ENCODE measurements at regions of chr3 and their contacts with region 1.

Region 1: DNA sequence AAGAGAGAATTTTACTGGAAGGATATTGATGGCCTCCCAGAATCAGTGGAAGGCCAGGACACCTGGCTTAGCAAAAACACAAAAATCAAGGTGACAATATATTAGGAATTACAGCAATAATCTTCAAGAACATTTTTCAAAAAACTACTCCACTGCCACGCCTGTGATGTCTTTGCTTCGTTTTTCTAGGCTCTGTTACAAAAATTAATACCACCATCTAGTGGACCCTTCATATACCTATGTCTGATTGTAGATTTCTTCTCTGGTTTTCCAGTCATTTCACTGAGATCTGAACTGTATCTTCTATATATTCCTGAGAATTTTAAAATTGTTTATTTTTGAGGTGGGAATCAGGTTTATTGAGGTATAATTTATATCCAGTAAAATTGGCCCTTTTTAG is 5.6 kb upstream of the SLC33A1 start:
- DNase-seq: peak; percentile 42
- ATAC-seq: peak; percentile 75
- H3K4me3 ChIP-seq: no peak overlapping the region
- H3K27ac ChIP-seq: no peak overlapping the region
- H3K4me1 ChIP-seq: peaks cover 3% of the 10 kb centered on the region; the same call in 1 of the 2 replicates
- H3K27me3 ChIP-seq: no peaks in the 10 kb centered on the region
- CTCF ChIP-seq: peak; percentile 58; the same call in 1 of the 2 replicates

Region 2: DNA sequence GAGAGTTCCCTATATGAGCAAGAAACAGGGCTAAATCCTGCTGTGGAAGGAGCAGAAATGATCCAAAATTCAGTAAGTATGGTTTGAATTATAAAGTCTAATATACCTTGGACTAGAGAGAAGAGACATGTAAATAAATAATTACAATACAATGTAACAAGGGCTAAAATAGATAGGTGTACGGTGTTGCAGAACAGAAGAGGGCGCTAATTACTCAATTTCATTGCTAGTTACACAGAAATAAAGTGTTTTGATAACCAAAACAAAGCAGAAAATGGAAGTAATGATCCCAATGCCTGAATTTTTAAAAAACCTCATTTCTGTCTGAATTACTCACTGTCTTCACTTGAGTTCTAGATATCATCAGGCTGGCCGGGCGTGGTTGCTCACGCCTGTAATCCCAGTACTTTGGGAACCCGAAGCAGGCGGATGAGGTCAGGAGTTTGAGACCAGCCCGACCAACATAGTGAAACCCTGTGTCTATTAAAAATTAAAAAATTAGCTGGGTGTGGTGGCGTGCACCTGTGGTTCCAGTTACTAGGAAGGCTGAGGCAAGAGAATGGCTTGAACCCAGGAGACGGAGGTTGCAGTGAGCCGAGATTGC is 106.7 kb before region 1 on chr3:
- CTCF ChIA-PET with region 1: no interaction called
- POLR2A ChIA-PET with region 1: no interaction called
- intact Hi-C with region 1: loop called (anchors 1 kb)
- DNase-seq: peak; percentile 67
- ATAC-seq: peak; percentile 37
- H3K4me3 ChIP-seq: no peak overlapping the region
- H3K27ac ChIP-seq: no peak overlapping the region
- H3K4me1 ChIP-seq: peaks cover 13% of the 10 kb centered on the region
- H3K27me3 ChIP-seq: no peaks in the 10 kb centered on the region
- CTCF ChIP-seq: peak; percentile 84

Region 3: GRCh38 chr3:155772801-155773200 is 87.1 kb before region 1 on chr3:
- CTCF ChIA-PET with region 1: no interaction called
- POLR2A ChIA-PET with region 1: no interaction called
- intact Hi-C with region 1: no loop called
- DNase-seq: no peak
- ATAC-seq: no peak
- H3K4me3 ChIP-seq: no peak overlapping the region
- H3K27ac ChIP-seq: no peak overlapping the region
- H3K4me1 ChIP-seq: no peaks in the 10 kb centered on the region
- H3K27me3 ChIP-seq: no peaks in the 10 kb centered on the region
- CTCF ChIP-seq: no peak

Measured in PC-3 (cell line).